MCF 10A (cell line): ENCODE measurements at regions of chr4 and their contacts with region 1.

Region 1: DNA sequence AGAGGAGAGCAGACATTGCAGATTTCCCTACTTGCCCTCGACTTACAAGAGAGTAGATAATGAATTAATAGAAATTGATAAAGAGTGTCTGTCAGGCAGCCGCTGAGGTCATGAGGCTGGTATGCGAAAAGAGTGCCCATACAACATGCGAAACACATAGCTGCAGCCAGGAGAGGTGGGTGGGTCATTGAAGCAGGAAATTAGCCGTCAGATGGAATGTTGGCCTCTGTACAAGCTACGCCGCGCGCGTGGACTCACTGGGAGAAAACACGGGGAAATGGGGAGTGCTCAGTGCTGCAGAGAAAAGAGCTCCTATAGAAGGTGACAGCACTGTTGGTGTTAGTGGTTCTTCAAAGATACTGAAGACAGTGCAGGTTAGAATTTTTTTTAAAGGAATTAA is 125.1 kb downstream of the RAPGEF2 start:
- DNase-seq: peak; percentile 72
- H3K4me3 Mint-ChIP-seq: peak overlapping the region; percentile 72
- H3K27ac Mint-ChIP-seq: peak overlapping the region; percentile 74
- H3K4me1 Mint-ChIP-seq: peaks cover 37% of the 10 kb centered on the region
- H3K27me3 Mint-ChIP-seq: no peaks in the 10 kb centered on the region
- CTCF ChIP-seq: no peak

Region 2: GRCh38 chr4:159283696-159284492 is 55.9 kb after region 1 on chr4:
- CTCF ChIA-PET with region 1: no interaction called
- POLR2A ChIA-PET with region 1: interaction called, 11 read pairs
- intact Hi-C with region 1: no loop called
- DNase-seq: peak; percentile 40
- H3K4me3 Mint-ChIP-seq: peak overlapping the region; percentile 28
- H3K27ac Mint-ChIP-seq: no peak overlapping the region
- H3K4me1 Mint-ChIP-seq: peaks cover 18% of the 10 kb centered on the region
- H3K27me3 Mint-ChIP-seq: no peaks in the 10 kb centered on the region
- CTCF ChIP-seq: no peak

Region 3: GRCh38 chr4:159298502-159298901 is 70.5 kb after region 1 on chr4:
- CTCF ChIA-PET with region 1: interaction called, 5 read pairs
- POLR2A ChIA-PET with region 1: interaction called, 21 read pairs
- intact Hi-C with region 1: loop called (anchors 2 kb)
- DNase-seq: peak; percentile 67
- H3K4me3 Mint-ChIP-seq: peak overlapping the region; percentile 67
- H3K27ac Mint-ChIP-seq: peak overlapping the region; percentile 72
- H3K4me1 Mint-ChIP-seq: peaks cover 33% of the 10 kb centered on the region
- H3K27me3 Mint-ChIP-seq: no peaks in the 10 kb centered on the region
- CTCF ChIP-seq: no peak

Region 4: GRCh38 chr4:159435561-159436023 is 207.6 kb after region 1 on chr4:
- CTCF ChIA-PET with region 1: no interaction called
- POLR2A ChIA-PET with region 1: interaction called, 14 read pairs
- intact Hi-C with region 1: no loop called
- DNase-seq: no peak
- H3K4me3 Mint-ChIP-seq: no peak overlapping the region
- H3K27ac Mint-ChIP-seq: peak overlapping the region; percentile 80
- H3K4me1 Mint-ChIP-seq: peaks cover 17% of the 10 kb centered on the region
- H3K27me3 Mint-ChIP-seq: no peaks in the 10 kb centered on the region
- CTCF ChIP-seq: no peak

Region 5: DNA sequence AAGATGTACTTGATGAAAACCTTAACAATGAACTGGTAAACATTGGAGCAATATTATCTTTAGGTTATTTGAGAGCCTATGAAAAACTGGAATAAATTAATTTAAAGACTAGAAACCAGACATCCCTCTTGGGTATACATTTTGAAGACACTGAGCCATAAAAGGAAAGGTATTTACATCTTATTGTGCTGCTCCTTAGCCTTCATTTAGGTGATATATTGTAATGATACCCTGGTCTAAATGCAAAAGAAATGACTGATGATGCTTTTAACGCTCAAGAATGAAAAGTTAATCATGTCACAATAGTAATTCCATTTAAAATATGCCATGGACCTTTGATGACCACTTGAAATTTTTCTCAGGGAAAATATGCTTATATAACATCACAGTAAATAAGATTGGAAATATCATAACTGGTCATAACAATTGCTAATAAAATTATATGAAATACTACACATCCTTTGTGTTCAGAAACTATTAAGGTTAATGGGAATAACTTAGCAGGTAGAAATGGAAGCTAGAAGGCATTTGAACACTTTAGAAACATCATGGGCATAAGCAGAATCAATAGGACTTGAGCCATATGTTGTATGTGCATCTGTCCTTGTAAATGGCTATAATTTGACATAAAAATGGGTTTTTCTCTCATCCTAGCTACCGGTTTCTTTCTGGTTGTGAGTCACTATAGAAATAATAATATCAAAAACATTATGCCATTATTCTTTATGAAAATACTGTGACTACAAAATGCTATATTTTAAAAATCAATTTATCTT is 854.6 kb after region 1 on chr4:
- CTCF ChIA-PET with region 1: no interaction called
- POLR2A ChIA-PET with region 1: no interaction called
- intact Hi-C with region 1: no loop called
- DNase-seq: no peak
- H3K4me3 Mint-ChIP-seq: no peak overlapping the region
- H3K27ac Mint-ChIP-seq: no peak overlapping the region
- H3K4me1 Mint-ChIP-seq: no peaks in the 10 kb centered on the region
- H3K27me3 Mint-ChIP-seq: no peaks in the 10 kb centered on the region
- CTCF ChIP-seq: no peak